OCI-LY7 (cell line): ENCODE measurements at regions of chr21 and their contacts with region 1.

Region 1: GRCh38 chr21:35616090-35616489 is 444.2 kb downstream of the SETD4 start:
- DNase-seq: peak; percentile 5
- H3K4me3 ChIP-seq: no peak overlapping the region
- H3K27ac ChIP-seq: no peak overlapping the region
- H3K4me1 ChIP-seq: no peaks in the 10 kb centered on the region
- CTCF ChIP-seq: peak; percentile 65

Region 2: GRCh38 chr21:34745557-34746255 is 870.4 kb before region 1 on chr21:
- CTCF ChIA-PET with region 1: no interaction called
- POLR2A ChIA-PET with region 1: no interaction called
- intact Hi-C with region 1: loop called (anchors 10 kb)
- DNase-seq: peak; percentile 69
- H3K4me3 ChIP-seq: peak overlapping the region; percentile 12
- H3K27ac ChIP-seq: no peak overlapping the region
- H3K4me1 ChIP-seq: no peaks in the 10 kb centered on the region
- CTCF ChIP-seq: peak; percentile 93

Region 3: GRCh38 chr21:35697321-35697808 is 81.3 kb after region 1 on chr21:
- CTCF ChIA-PET with region 1: no interaction called
- POLR2A ChIA-PET with region 1: no interaction called
- intact Hi-C with region 1: no loop called
- DNase-seq: no peak
- H3K4me3 ChIP-seq: no peak overlapping the region
- H3K27ac ChIP-seq: no peak overlapping the region
- H3K4me1 ChIP-seq: no peaks in the 10 kb centered on the region
- CTCF ChIP-seq: no peak